ENCODE measurements at regions of chr6 and their contacts with region 1.

Region 1: DNA sequence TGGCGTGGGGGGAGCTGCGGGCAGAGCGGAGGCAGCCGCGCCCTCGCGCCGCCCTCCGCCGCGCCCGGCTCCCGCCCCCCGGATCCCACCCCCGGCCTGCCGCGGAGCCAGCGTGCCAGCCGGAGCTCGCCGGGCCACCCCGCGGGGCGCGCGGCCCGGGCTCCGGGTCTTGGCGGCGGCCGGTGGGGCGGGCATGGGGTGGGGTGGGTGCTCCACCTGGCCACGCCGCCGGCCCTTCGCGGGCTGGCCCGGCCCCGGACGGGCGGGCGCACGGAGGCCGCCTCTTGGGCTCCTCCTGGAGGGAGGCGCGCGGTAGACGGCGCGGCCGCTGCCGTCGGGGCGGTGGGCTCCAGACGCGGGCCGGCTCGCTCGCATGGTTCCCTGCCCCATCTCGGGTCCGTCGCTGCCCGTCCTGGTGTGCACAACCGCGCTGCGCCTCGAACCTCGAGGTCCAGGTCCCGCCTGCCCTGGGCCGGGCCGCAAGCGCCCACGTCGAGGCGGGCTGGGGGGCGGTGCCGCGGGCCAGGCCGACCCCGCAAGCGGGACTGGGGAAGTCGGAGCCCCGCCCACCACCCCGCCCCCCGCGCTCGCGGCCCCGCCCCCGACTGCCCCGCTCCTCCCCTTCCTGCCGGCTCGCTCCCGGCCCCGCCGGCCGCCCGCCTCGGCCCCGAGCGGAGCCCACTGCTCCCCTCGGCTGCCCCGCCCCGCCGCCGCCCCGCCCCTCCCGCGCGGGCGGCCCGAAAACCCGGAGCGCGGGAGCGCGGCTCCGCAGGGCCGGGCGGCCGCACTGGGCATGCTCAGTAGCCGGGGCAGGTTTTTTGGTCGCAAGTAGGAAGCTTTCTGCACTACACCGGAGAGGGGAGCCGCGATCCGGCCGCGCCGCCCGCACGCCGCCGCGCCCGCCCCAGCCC is at the start of gene CDYL:
- DNase-seq: peak; percentile 87
- H3K4me3 Mint-ChIP-seq: peak within 1 kb of the TSS; percentile 89
- H3K27ac Mint-ChIP-seq: peak within 1 kb of the TSS; percentile 83
- H3K4me1 Mint-ChIP-seq: peaks cover 47% of the 10 kb centered on the region
- H3K27me3 Mint-ChIP-seq: peaks cover 34% of the 10 kb centered on the region
- total RNA-seq, gene CDYL: 26.8 and 29.5 TPM in 2 replicates

Region 2: DNA sequence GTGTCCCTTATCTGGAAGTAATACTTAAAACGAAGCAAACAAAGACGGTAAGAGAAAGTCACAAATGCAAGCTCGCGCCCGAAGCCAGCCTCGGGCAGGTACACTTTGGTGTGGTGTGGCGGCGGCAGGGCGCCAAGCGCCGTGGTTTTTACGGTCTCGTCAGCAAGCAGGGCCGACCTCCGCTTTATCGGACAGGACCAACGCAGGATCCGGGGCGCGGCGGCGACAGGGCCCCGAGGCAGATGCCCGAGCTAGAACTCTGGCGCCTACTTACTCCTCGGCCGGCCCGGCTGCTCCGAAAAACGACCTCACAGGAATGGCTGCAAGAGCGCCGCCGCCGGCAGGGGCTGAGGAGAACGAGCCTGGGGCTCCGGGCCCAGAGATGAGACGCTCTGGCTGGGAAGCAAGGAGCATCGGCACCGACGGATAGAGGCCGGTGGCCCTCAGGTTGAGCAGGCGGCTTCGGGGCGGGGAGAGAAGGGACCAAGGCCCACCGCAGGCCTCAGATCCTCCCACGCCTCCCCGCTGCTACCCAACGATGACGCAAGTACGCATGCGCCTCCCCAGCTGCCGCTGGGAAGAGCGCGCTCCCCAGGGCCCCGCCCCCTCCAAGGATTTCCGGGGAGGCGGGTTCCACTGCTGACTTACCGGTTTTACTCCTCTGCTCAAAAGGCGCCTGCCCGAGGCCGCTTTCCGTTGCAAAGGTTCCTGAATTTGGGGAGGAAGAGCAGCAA is 757.5 kb before region 1 on chr6:
- intact Hi-C with region 1: loop called (anchors 2 kb)
- DNase-seq: peak; percentile 96
- H3K4me3 Mint-ChIP-seq: peak overlapping the region; percentile 99
- H3K27ac Mint-ChIP-seq: peak overlapping the region; percentile 100
- H3K4me1 Mint-ChIP-seq: peaks cover 60% of the 10 kb centered on the region
- H3K27me3 Mint-ChIP-seq: no peaks in the 10 kb centered on the region

Region 3: GRCh38 chr6:4637691-4638433 is 138.0 kb before region 1 on chr6:
- intact Hi-C with region 1: loop called (anchors 5 kb)
- DNase-seq: peak; percentile 8
- H3K4me3 Mint-ChIP-seq: no peak overlapping the region
- H3K27ac Mint-ChIP-seq: peak overlapping the region; percentile 52
- H3K4me1 Mint-ChIP-seq: peaks cover 11% of the 10 kb centered on the region
- H3K27me3 Mint-ChIP-seq: peaks cover 4% of the 10 kb centered on the region

Region 4: GRCh38 chr6:4848382-4849068 is 72.7 kb after region 1 on chr6:
- intact Hi-C with region 1: loop called (anchors 5 kb)
- DNase-seq: no peak
- H3K4me3 Mint-ChIP-seq: no peak overlapping the region
- H3K27ac Mint-ChIP-seq: no peak overlapping the region
- H3K4me1 Mint-ChIP-seq: peaks cover 14% of the 10 kb centered on the region
- H3K27me3 Mint-ChIP-seq: no peaks in the 10 kb centered on the region

Region 5: DNA sequence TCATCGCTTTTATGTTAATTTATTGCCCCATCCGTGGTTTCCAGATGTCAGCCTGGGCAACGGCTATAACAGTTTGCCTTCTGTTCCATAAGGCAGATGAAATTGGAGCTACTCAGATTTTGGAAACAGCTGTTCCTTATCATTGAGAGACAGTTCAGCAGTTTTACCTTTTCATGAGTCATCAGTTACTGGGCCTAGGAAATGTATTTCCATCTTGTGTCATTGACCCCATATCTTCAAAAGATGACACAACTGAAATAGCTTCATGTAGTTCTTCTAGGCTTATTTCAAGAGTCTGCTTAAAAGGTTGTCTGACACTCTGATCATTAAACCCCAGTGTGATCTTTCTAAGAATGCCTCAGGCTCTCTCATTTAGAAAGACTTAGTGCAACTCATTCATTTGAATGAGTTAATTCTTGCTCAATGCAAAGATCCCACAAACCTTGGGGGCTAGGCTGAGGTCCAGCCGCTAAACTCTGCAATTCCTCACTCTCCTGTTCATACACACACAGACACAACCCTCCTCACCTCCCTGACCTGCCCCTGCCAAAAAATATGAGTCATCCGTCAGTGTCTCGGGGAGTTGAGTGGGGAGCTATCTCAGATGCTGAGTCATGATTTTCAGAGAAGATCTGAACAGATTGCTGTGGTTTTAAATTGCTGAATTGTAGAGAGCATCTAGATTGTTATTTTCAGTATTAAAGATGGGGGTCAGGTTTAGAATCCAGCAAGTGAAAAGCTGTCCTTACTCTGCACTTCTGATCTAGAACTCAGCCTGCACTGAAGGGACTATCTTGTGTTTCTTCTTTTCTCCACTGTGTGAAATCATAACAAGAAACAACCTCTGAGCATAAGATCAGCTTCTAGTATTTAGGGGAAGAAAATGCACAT is 166.2 kb after region 1 on chr6:
- intact Hi-C with region 1: loop called (anchors 2 kb)
- DNase-seq: peak; percentile 26
- H3K4me3 Mint-ChIP-seq: peak overlapping the region; percentile 4
- H3K27ac Mint-ChIP-seq: peak overlapping the region; percentile 20
- H3K4me1 Mint-ChIP-seq: peaks cover 44% of the 10 kb centered on the region
- H3K27me3 Mint-ChIP-seq: no peaks in the 10 kb centered on the region

Region 6: GRCh38 chr6:5174244-5174643 is 398.4 kb after region 1 on chr6:
- intact Hi-C with region 1: loop called (anchors 10 kb)
- DNase-seq: peak; percentile 63
- H3K4me3 Mint-ChIP-seq: peak overlapping the region; percentile 45
- H3K27ac Mint-ChIP-seq: peak overlapping the region; percentile 83
- H3K4me1 Mint-ChIP-seq: peaks cover 48% of the 10 kb centered on the region
- H3K27me3 Mint-ChIP-seq: peaks cover 2% of the 10 kb centered on the region

Region 7: DNA sequence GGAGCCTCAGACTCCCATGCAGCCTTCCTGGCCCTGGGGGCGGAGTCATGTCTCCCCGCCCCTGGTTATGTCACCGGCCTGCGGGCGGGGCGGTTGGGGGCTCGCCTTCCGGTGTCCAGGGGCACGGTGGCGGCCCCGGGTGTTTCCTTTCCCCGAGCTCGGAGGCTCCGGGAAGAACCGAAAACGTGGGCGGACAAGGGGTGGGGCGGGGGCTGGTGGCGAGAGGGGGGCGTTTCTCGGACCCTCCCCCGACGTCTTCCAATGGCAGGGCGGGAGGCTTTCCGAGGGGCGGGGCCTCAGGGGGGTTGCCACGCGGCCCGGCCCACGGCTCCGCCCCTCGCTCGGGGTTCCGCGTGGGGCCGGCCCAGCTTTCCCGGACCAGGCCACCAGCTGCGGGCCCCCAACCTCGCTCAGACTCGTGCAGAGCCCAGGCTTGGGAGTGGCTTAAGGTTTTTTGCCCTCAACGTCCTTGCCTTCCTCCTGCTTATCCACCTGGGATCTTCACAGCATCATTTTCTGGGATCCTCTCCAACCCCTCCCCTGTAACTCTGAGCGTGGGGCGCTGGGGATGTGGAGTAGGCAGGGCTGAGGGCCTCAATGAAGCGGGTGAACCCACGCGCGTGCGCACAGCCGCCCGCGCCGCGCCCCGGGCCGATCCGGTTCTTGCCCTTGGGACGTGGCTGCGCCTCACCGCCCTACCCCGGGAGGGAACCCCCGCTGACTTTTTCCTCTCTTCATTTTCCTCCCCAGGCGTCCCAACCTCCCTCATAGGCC is 1233.0 kb after region 1 on chr6:
- intact Hi-C with region 1: loop called (anchors 10 kb)
- DNase-seq: peak; percentile 54
- H3K4me3 Mint-ChIP-seq: peak overlapping the region; percentile 81
- H3K27ac Mint-ChIP-seq: peak overlapping the region; percentile 40
- H3K4me1 Mint-ChIP-seq: peaks cover 38% of the 10 kb centered on the region
- H3K27me3 Mint-ChIP-seq: peaks cover 70% of the 10 kb centered on the region

Measured in activated T-helper 1 cell treated with anti-CD3 and anti-CD28 coated beads, Interleukin-12 subunit alpha, Interleukin-12 subunit beta, Interleukin-2, Interleukin-4 antibody, amounts not matched to agents 30 ng/mL and 10 ng/mL and 1 ng/mL, durations not matched to agents 14 hours and 24 hours and 36 hours (primary cell).